B cell (primary cell): ENCODE measurements at regions of chr3 and their contacts with region 1.

Region 1: GRCh38 chr3:66500576-66501482 is at the start of gene LRIG1:
- DNase-seq: peak; percentile 92
- ATAC-seq: peak; percentile 95
- H3K4me3 ChIP-seq: peak within 1 kb of the TSS; percentile 44 to 68 (median 64)
- H3K4me3 Mint-ChIP-seq: peak within 1 kb of the TSS; percentile 94
- H3K27ac ChIP-seq: no peak within 1 kb of the TSS
- H3K27ac Mint-ChIP-seq: peak within 1 kb of the TSS; percentile 71
- H3K4me1 ChIP-seq: peaks cover 20 to 22% of the 10 kb centered on the region in 2 donors
- H3K4me1 Mint-ChIP-seq: peaks cover 24% of the 10 kb centered on the region
- H3K27me3 ChIP-seq: peaks cover 0 to 20% (median 18%) of the 10 kb centered on the region in 4 experiments
- H3K27me3 Mint-ChIP-seq: peaks cover 40% of the 10 kb centered on the region
- CTCF ChIP-seq: peak; percentile 47
- total RNA-seq, gene LRIG1: 10.6 and 12.4 TPM in 2 replicates

Region 2: GRCh38 chr3:66220602-66221377 is 280.0 kb before region 1 on chr3 and contains the start of gene SLC25A26:
- CTCF ChIA-PET with region 1: no interaction called
- POLR2A ChIA-PET with region 1: interaction called, 3 read pairs
- intact Hi-C with region 1: loop called (anchors 1 kb)
- DNase-seq: peak; percentile 96
- ATAC-seq: peak; percentile 95
- H3K4me3 ChIP-seq: peak within 1 kb of the TSS; percentile 74 to 96 (median 79)
- H3K4me3 Mint-ChIP-seq: peak within 1 kb of the TSS; percentile 100
- H3K27ac ChIP-seq: peak within 1 kb of the TSS; percentile 64 to 83
- H3K27ac Mint-ChIP-seq: peak within 1 kb of the TSS; percentile 96
- H3K4me1 ChIP-seq: peaks cover 10 to 14% of the 10 kb centered on the region in 2 donors
- H3K4me1 Mint-ChIP-seq: peaks cover 35% of the 10 kb centered on the region
- H3K27me3 ChIP-seq: no peaks in the 10 kb centered on the region
- H3K27me3 Mint-ChIP-seq: peaks cover 6% of the 10 kb centered on the region
- CTCF ChIP-seq: no peak
- total RNA-seq, gene SLC25A26: 19.7 and 23.8 TPM in 2 replicates

Region 3: GRCh38 chr3:66302288-66302687 is 198.5 kb before region 1 on chr3:
- CTCF ChIA-PET with region 1: no interaction called
- POLR2A ChIA-PET with region 1: no interaction called
- intact Hi-C with region 1: loop called (anchors 5 kb)
- DNase-seq: peak; percentile 37
- ATAC-seq: peak; percentile 75
- H3K4me3 ChIP-seq: no peak overlapping the region
- H3K4me3 Mint-ChIP-seq: peak overlapping the region; percentile 42
- H3K27ac ChIP-seq: peak overlapping the region; percentile 54 to 78
- H3K27ac Mint-ChIP-seq: peak overlapping the region; percentile 66
- H3K4me1 ChIP-seq: peaks cover 35 to 39% of the 10 kb centered on the region in 2 donors
- H3K4me1 Mint-ChIP-seq: peaks cover 55% of the 10 kb centered on the region
- H3K27me3 ChIP-seq: no peaks in the 10 kb centered on the region
- H3K27me3 Mint-ChIP-seq: no peaks in the 10 kb centered on the region
- CTCF ChIP-seq: no peak

Region 4: DNA sequence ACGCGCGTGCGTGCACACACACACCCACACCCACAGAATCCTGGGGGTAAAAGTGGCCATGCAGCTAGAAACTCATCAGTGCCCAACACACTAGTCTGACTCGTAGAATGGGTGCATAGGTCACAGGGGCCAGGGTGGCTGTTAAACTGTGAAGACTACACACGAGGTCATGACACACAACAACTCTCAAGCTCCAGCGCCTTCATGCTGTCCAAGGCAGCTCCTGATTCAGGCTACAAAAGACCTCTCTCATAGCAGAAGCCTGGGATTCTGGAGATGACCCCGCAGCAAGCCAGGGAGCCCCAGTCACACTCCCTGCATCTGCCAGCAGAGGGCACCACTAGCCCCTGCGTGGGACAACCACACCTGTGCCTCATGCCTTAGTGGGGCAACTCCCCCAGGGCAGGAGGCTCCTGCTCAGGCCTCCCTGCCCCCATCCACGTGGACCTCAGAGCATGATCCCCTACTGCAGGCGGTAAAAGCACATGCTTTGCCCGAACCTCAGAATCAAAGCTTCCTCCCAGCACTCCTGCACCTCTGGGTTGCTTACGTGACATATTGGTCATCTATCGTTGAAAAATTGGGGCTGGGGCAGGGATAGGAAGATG is 93.1 kb before region 1 on chr3:
- CTCF ChIA-PET with region 1: interaction called, 3 read pairs
- POLR2A ChIA-PET with region 1: no interaction called
- intact Hi-C with region 1: loop called (anchors 2 kb)
- DNase-seq: peak; percentile 70
- ATAC-seq: peak; percentile 89
- H3K4me3 ChIP-seq: no peak overlapping the region
- H3K4me3 Mint-ChIP-seq: no peak overlapping the region
- H3K27ac ChIP-seq: no peak overlapping the region
- H3K27ac Mint-ChIP-seq: no peak overlapping the region
- H3K4me1 ChIP-seq: no peaks in the 10 kb centered on the region
- H3K4me1 Mint-ChIP-seq: no peaks in the 10 kb centered on the region
- H3K27me3 ChIP-seq: no peaks in the 10 kb centered on the region
- H3K27me3 Mint-ChIP-seq: no peaks in the 10 kb centered on the region
- CTCF ChIP-seq: peak; percentile 80

Region 5: DNA sequence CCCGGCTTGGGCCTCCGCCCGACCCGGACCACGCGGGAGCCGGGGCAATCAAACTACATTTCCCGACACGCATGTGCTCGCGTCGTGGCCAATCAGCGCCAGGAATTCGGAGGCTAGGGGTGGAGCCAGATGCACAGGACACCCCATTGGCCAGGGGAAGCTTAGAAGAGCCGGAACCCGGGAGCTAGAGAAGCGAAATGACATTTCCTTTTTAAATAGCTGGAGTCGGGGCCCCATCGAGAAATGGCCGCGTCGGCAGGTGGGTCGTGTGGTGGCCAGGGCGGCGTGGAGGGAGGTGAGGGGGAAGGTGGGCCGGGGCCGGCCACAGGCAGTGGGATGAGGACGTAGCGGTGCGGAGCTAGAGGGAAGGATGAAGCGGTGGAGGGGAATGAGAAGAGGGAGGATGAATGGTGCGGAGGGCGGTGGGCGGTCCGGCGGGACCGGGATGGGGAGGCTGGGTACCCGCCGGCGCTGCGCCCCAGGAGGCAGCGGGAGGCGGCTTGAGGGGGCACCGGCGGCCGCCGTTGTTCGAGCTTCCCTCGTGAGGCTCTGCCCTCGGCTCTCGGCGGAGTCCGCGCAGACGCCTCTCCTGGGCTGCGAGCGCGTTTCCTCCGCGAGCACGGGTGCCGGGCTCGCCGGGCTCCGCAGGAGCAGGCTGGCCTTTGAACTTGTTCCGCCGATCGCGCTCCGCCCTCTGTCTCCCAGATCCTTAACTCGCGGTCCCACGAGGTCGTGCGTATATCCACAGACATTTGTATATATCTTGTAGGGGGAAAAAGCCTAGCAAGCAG is 497.5 kb after region 1 on chr3 and contains the start of gene KBTBD8:
- CTCF ChIA-PET with region 1: no interaction called
- POLR2A ChIA-PET with region 1: no interaction called
- intact Hi-C with region 1: loop called (anchors 2 kb)
- DNase-seq: peak; percentile 99
- ATAC-seq: peak; percentile 86
- H3K4me3 ChIP-seq: peak within 1 kb of the TSS; percentile 68 to 90 (median 82)
- H3K4me3 Mint-ChIP-seq: peak within 1 kb of the TSS; percentile 96
- H3K27ac ChIP-seq: peak within 1 kb of the TSS; percentile 79 to 91
- H3K27ac Mint-ChIP-seq: peak within 1 kb of the TSS; percentile 98
- H3K4me1 ChIP-seq: peaks cover 36 to 41% of the 10 kb centered on the region in 2 donors
- H3K4me1 Mint-ChIP-seq: peaks cover 44% of the 10 kb centered on the region
- H3K27me3 ChIP-seq: no peaks in the 10 kb centered on the region
- H3K27me3 Mint-ChIP-seq: peaks cover 4% of the 10 kb centered on the region
- CTCF ChIP-seq: no peak
- total RNA-seq, gene KBTBD8: 27.6 and 32.6 TPM in 2 replicates